Astrocyte of the cerebellum (primary cell): ENCODE measurements at regions of chr1 and their contacts with region 1.

Region 1: GRCh38 chr1:186985889-186986491 is 157.2 kb downstream of the PLA2G4A start:
- DNase-seq: peak; percentile 53
- H3K4me3 ChIP-seq: no peak overlapping the region
- CTCF ChIP-seq: peak; percentile 59

Region 2: GRCh38 chr1:186482661-186483255 is 503.2 kb before region 1 on chr1:
- in situ Hi-C with region 1: loop called (anchors 25 kb)
- DNase-seq: peak; percentile 60
- H3K4me3 ChIP-seq: no peak overlapping the region
- CTCF ChIP-seq: peak; percentile 96

Region 3: GRCh38 chr1:186605762-186606350 is 380.1 kb before region 1 on chr1:
- in situ Hi-C with region 1: loop called (anchors 5 kb)
- DNase-seq: peak; percentile 53
- H3K4me3 ChIP-seq: no peak overlapping the region
- CTCF ChIP-seq: peak; percentile 90

Region 4: DNA sequence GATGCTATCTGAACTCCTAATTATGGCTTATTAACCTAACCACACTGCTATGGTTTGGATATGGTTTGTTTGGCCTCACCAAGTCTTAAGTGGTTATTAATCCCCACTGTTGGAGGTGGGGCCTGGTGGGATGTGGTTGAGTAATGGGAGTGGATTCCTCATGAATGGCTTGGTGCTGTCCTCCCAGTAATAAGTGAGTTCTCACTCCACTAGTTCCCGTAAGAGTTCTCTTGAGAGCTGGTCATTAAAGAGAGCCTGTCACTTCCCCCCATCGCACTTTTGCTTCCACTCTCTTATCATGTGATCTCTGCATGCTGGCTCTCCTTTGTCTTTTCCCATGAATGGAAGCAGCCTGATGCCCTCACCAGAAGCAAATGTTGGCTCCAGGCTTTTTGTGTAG is 171.6 kb after region 1 on chr1:
- in situ Hi-C with region 1: no loop called
- DNase-seq: no peak
- H3K4me3 ChIP-seq: no peak overlapping the region
- CTCF ChIP-seq: no peak